AG04450 (cell line): ENCODE measurements at regions of chr11 and their contacts with region 1.

Region 1: GRCh38 chr11:47355283-47356128 is 3.0 kb upstream of the MYBPC3 start:
- DNase-seq: peak; percentile 74
- H3K4me3 ChIP-seq: peak overlapping the region; percentile 41
- H3K27ac ChIP-seq: no peak overlapping the region
- H3K27me3 ChIP-seq: no peaks in the 10 kb centered on the region
- CTCF ChIP-seq: peak; percentile 95

Region 2: DNA sequence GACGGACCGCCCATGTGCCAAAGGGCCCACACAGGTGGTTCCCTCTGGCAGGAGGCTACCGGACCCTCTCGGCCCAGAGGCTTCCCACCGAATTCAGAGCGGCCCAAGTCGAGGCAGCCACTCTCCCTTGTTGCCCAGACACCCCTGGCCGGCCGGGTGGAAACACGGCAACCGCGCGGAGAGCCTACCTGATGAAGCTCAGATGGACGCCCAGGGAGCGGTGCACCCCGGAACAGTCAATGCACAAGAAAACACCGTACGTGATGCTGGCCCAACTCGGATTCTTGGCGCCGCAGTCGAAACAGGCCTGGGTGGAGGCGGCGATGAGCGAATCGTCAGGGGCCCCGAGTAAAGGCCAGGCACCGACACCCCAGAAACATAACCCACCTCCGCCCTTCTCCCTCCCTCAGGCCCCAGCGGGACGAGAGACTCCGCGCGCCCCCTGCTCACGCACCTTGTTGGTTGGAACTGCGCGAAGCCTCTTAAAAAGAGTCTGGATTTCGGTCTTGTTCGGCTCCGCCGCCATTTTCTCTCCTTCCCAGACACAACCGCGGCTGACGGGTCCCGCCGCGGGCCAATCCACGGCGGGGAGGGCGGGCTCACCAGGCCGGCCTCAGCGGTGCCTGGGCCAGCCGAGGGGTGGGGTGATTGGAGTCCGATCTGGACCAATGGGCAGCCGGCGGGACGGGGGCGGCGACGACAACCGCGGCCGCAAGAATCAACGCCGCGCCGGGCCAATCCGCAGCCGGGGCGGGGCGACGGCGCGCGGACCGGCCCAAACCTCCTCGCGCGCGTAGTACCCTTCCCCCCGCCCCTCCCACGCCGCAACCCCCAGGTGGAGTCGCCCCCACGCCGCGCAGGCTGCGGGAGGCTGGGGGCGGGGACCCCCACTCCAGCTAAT is 178.9 kb before region 1 on chr11 and contains the start of gene ARFGAP2:
- CTCF ChIA-PET with region 1: interaction called, 43 read pairs
- POLR2A ChIA-PET with region 1: no interaction called
- DNase-seq: peak; percentile 84
- H3K4me3 ChIP-seq: peak within 1 kb of the TSS; percentile 98
- H3K27ac ChIP-seq: peak within 1 kb of the TSS; percentile 89
- H3K27me3 ChIP-seq: no peaks in the 10 kb centered on the region
- CTCF ChIP-seq: no peak
- polyA plus RNA-seq, gene ARFGAP2: 38.6 and 44.4 TPM in 2 replicates

Region 3: DNA sequence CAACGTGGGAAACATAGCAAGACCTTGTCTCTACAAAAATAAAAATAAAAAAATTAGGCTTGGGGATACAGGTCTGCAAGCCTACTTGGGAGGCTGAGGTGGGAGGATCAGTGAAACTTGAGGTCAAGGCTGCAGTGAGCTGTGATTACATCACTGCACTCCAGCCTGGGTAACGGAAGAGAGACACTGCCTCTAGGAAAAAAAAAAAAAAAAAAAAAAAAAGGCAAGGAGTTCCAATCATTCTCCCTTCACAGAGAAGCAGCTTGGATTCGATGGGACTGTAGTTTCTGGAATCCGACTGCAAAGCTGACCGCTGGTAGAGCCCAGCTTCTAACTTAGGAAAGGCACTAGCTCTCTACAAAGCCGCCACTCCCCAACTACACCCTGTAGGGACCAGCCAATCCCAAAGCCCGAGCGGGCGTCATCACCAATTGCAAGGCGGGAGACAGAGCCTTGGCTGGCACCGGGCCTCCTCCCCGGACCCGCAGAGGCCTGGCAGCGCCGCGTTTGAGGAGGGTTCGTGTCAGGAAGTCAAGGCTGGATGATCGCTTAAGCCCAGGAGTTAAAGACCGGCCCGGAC is 141.4 kb before region 1 on chr11:
- CTCF ChIA-PET with region 1: interaction called, 15 read pairs
- POLR2A ChIA-PET with region 1: no interaction called
- DNase-seq: no peak
- H3K4me3 ChIP-seq: peak overlapping the region; percentile 80
- H3K27ac ChIP-seq: peak overlapping the region; percentile 68
- H3K27me3 ChIP-seq: no peaks in the 10 kb centered on the region
- CTCF ChIP-seq: no peak

Region 4: DNA sequence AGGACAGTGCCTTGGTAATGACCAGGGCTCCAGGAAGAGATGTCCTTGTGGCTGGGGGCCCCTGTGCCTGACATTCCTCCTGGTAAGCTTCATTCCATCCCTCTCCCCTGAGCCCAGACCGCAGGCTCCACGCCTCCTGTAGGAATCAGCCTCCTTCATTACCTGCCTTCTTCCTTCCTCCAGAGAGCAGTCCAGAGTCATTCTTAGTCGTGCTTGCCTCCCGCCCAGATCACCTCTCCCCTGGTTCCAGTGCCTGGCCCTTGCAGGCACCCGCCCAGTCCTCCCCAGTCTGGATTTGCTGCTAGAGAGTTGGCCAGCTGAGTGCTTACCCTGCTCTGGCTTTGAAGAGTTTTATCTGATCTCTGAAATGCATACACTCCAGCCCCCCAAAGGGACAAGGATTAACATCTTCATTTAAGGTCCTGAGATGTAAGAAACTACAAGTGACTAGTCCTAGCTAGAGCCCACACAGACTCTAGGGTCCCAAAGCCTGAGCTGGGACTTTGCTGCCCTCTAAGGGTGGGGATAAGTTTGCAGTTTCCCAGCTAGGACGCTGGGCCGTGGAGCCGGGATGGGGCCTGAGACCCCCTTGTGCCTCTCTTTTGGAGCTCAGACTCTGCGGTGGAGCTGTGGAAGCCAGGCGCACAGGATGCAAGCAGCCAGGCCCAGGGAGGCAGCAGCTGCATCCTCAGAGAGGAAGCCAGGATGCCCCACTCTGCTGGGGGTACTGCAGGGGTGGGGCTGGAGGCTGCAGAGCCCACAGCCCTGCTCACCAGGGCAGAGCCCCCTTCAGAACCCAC is 96.1 kb before region 1 on chr11:
- CTCF ChIA-PET with region 1: interaction called, 14 read pairs
- POLR2A ChIA-PET with region 1: no interaction called
- DNase-seq: no peak
- H3K4me3 ChIP-seq: no peak overlapping the region
- H3K27ac ChIP-seq: no peak overlapping the region
- H3K27me3 ChIP-seq: no peaks in the 10 kb centered on the region
- CTCF ChIP-seq: peak; percentile 70

Region 5: GRCh38 chr11:47314992-47315391 is 40.5 kb before region 1 on chr11:
- CTCF ChIA-PET with region 1: interaction called, 12 read pairs
- POLR2A ChIA-PET with region 1: no interaction called
- DNase-seq: no peak
- H3K4me3 ChIP-seq: no peak overlapping the region
- H3K27ac ChIP-seq: no peak overlapping the region
- H3K27me3 ChIP-seq: no peaks in the 10 kb centered on the region
- CTCF ChIP-seq: no peak

Region 6: GRCh38 chr11:47380069-47380468 is 24.6 kb after region 1 on chr11:
- CTCF ChIA-PET with region 1: no interaction called
- POLR2A ChIA-PET with region 1: no interaction called
- DNase-seq: no peak
- H3K4me3 ChIP-seq: no peak overlapping the region
- H3K27ac ChIP-seq: no peak overlapping the region
- H3K27me3 ChIP-seq: no peaks in the 10 kb centered on the region
- CTCF ChIP-seq: no peak

Region 7: DNA sequence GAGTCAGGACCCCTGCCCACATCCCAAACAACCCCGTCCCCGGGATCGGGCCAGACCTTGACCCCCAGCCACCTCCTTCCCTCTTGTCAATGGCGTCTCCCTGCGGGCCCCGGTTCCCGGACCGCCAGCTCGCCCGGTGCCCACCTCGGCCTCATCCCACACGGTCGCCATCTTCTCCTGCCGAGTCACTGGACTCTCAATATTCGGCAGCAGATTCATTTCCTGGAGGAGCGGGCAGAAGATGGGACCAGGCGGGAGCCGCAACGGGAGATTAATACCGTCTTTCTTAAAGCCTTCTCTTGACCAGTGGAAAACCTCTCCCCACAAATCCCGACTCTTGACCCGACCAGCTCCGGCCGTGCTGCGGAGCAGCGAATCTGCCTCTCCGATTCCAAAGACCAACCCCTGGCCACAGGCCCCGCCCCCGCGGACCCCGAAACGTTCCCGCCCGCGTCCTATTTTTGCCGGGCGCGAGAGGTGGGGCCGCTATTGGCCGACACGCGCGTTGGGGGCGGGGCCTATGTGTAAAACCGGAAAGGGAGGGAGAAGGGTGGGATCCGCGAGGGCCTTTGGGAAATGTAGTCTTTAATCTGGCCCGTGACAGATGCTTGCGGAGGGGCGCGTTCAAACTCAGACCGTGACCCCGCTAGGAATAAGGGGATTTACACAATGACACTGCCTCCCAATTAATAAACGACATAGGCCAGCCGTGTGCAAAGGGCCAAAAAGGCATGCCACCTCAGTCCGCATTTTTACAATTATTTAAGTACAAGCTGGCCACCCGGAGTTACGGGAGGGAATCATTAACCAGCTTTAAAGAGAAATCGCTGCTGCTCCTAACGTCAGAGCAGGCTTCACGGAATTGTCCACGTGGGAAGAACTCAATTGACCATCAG is 70.8 kb after region 1 on chr11 and contains the start of gene PSMC3:
- CTCF ChIA-PET with region 1: no interaction called
- POLR2A ChIA-PET with region 1: no interaction called
- DNase-seq: peak; percentile 87
- H3K4me3 ChIP-seq: peak within 1 kb of the TSS; percentile 94
- H3K27ac ChIP-seq: peak within 1 kb of the TSS; percentile 89
- H3K27me3 ChIP-seq: no peaks in the 10 kb centered on the region
- CTCF ChIP-seq: no peak
- polyA plus RNA-seq, gene PSMC3: 211 and 290 TPM in 2 replicates